Right ventricle myocardium superior (tissue), 1 donor: ENCODE measurements at regions of chr3 and their contacts with region 1.

Region 1: DNA sequence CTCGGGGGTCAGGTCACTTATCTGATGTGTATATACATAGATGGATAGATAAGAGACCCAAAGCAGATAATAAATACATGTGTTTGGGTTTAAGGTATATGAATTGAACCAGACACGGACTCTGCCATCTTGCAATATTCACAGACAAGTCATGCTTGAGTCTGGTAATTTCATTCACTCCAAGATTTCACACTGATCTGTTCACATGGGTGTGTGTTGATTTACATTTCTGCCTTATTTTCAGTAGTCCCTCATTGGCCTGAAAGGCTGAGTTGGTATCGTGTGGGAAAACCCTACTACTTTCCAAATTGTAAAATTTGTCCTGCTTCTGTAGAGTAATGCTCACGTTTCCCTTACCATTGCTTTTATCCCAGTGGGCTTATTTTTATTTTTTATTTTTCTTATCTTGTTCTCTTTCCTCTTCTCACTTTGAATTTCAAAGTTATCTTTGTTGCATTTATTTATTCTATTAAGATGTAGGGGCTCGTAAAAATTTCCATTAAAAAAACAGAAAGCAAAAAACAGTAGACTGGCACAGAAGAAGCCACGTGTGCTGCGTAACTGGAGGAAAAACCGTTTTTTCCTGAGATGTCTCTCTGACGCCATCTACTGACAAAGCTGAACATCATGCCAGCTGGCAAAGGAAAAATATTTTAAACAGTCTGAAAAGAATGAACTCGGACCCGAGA is 10.8 kb upstream of the MFSD1 start:
- DNase-seq: no peak
- ATAC-seq: peak; percentile 74

Region 2: GRCh38 chr3:158727206-158728060 is 63.6 kb before region 1 on chr3:
- intact Hi-C with region 1: loop called (anchors 5 kb)
- DNase-seq: no peak
- ATAC-seq: peak; percentile 50